Activated B cell treated with CpG ODN at 0.5 μM for 24 hours (primary cell): ENCODE measurements at regions of chr3 and their contacts with region 1.

Region 1: DNA sequence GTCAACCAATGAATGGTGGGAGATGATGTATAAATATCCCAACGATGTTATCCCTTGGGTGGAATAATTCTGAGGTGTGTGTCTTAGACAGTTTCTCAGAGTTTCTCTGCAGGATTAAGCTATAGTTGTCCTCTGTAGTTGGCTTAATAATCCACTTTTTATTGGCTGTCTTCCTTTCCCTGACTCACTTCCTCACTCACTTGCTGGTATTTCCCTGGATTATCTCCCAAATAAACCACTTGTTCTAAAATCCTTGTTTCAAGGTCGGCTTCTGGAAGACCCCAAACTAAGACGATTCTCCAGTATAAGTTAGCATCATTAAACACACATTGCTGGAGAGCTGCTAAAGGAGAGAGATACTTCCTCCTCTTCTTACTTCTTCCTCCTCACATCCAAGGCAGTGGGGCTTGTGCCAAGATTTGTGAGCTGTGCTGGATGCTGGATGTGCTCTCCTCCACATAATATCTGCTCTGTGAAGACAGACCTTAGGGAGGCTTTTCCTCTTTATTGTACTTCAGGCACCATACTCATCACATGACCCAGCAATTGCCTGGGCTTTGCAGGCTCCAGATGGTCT is 22.5 kb upstream of the ROPN1 start:
- DNase-seq: no peak
- ATAC-seq: no peak
- H3K4me3 Mint-ChIP-seq: no peak overlapping the region
- H3K27ac Mint-ChIP-seq: no peak overlapping the region
- H3K4me1 Mint-ChIP-seq: no peaks in the 10 kb centered on the region
- H3K27me3 Mint-ChIP-seq: peaks cover 20% of the 10 kb centered on the region
- CTCF ChIP-seq: no peak

Region 2: GRCh38 chr3:124078953-124079911 is 64.8 kb after region 1 on chr3:
- CTCF ChIA-PET with region 1: interaction called, 3 read pairs
- POLR2A ChIA-PET with region 1: no interaction called
- intact Hi-C with region 1: loop called (anchors 1 kb)
- DNase-seq: no peak
- ATAC-seq: no peak
- H3K4me3 Mint-ChIP-seq: no peak overlapping the region
- H3K27ac Mint-ChIP-seq: no peak overlapping the region
- H3K4me1 Mint-ChIP-seq: peaks cover 3% of the 10 kb centered on the region
- H3K27me3 Mint-ChIP-seq: peaks cover 17% of the 10 kb centered on the region
- CTCF ChIP-seq: peak; percentile 79